Mammary epithelial cell (primary cell): ENCODE measurements at regions of chr1 and their contacts with region 1.

Region 1: DNA sequence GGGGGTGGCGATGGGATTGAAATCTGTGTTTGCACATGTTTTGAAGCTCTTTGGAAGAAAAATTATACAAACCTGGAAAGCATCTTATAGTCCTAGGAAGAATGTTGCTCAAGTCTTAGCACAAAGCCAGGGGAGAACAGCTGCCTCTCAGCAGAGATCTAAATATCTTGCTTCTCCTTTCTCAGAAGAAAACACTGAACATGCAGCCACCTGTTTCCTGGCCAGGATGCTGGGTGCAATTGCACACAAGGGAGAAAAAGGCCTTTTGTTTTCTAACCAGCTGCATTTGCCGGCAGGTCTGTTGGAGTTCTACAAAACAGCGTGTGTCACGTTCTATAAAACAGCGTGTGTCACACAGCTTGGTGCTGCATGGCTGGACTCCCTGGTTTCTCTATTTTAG is 259.6 kb upstream of the PLD5 start:
- DNase-seq: peak; percentile 32
- H3K4me3 ChIP-seq: no peak overlapping the region
- H3K27ac ChIP-seq: no peak overlapping the region
- H3K4me1 ChIP-seq: no peaks in the 10 kb centered on the region
- H3K27me3 ChIP-seq: peaks cover 5% of the 10 kb centered on the region
- CTCF ChIP-seq: no peak

Region 2: DNA sequence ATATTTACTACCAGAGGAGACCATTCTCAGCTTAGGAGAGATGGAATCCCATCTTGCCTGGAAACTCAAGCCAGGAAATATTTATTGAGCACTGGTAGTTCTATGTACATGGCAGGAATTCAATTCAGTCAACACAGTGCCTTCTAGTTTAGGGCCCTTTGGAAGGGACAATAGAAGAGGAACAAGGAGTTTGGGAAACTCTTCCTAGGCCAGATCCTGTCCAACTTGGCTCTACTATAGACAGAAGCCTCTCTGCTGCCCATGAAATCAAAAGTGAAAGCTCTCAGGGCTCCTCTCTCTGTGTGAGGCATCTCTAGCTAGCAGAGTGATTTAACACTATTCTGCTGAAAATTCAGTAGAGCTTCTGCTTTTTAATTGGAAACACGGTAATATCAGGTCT is 540.6 kb before region 1 on chr1:
- CTCF ChIA-PET with region 1: no interaction called
- dilution Hi-C with region 1: no loop called
- in situ Hi-C with region 1: no loop called
- intact Hi-C with region 1: no loop called
- DNase-seq: no peak
- H3K4me3 ChIP-seq: no peak overlapping the region
- H3K27ac ChIP-seq: no peak overlapping the region
- H3K4me1 ChIP-seq: no peaks in the 10 kb centered on the region
- H3K27me3 ChIP-seq: no peaks in the 10 kb centered on the region
- CTCF ChIP-seq: no peak

Region 3: GRCh38 chr1:242440757-242441156 is 343.3 kb before region 1 on chr1:
- CTCF ChIA-PET with region 1: no interaction called
- dilution Hi-C with region 1: no loop called
- in situ Hi-C with region 1: no loop called
- intact Hi-C with region 1: no loop called
- DNase-seq: no peak
- H3K4me3 ChIP-seq: no peak overlapping the region
- H3K27ac ChIP-seq: no peak overlapping the region
- H3K4me1 ChIP-seq: no peaks in the 10 kb centered on the region
- H3K27me3 ChIP-seq: no peaks in the 10 kb centered on the region
- CTCF ChIP-seq: no peak

Region 4: GRCh38 chr1:242690849-242691602 is 93.0 kb before region 1 on chr1:
- CTCF ChIA-PET with region 1: no interaction called
- dilution Hi-C with region 1: loop called (anchors 5 kb)
- in situ Hi-C with region 1: no loop called
- intact Hi-C with region 1: no loop called
- DNase-seq: no peak
- H3K4me3 ChIP-seq: no peak overlapping the region
- H3K27ac ChIP-seq: no peak overlapping the region
- H3K4me1 ChIP-seq: no peaks in the 10 kb centered on the region
- H3K27me3 ChIP-seq: no peaks in the 10 kb centered on the region
- CTCF ChIP-seq: no peak